Gastrocnemius medialis (tissue), 4 donors: ENCODE measurements at regions of chr14 and their contacts with region 1.

Region 1: GRCh38 chr14:66483322-66483721 is 2.8 kb upstream of the CCDC196 start:
- DNase-seq: peak; percentile 27 to 29
- ATAC-seq: peak; percentile 95 to 97
- H3K4me3 ChIP-seq: no peak overlapping the region
- H3K27ac ChIP-seq: peak overlapping the region in 3 of 4 donors; percentile 10 to 49 (median 32)
- H3K4me1 ChIP-seq: peaks cover 18 to 22% of the 10 kb centered on the region in 2 donors
- H3K27me3 ChIP-seq: no peaks in the 10 kb centered on the region
- CTCF ChIP-seq: no peak
- POLR2A ChIP-seq: no peak

Region 2: GRCh38 chr14:66425402-66425801 is 57.9 kb before region 1 on chr14:
- in situ Hi-C with region 1: no loop called
- intact Hi-C with region 1: loop called (anchors 1 kb)
- DNase-seq: peak; percentile 52 to 74
- ATAC-seq: peak; percentile 99
- H3K4me3 ChIP-seq: no peak overlapping the region
- H3K27ac ChIP-seq: peak overlapping the region; percentile 41 to 81 (median 63)
- H3K4me1 ChIP-seq: peaks cover 14 to 26% of the 10 kb centered on the region in 2 donors
- H3K27me3 ChIP-seq: no peaks in the 10 kb centered on the region
- CTCF ChIP-seq: no peak
- POLR2A ChIP-seq: no peak

Region 3: DNA sequence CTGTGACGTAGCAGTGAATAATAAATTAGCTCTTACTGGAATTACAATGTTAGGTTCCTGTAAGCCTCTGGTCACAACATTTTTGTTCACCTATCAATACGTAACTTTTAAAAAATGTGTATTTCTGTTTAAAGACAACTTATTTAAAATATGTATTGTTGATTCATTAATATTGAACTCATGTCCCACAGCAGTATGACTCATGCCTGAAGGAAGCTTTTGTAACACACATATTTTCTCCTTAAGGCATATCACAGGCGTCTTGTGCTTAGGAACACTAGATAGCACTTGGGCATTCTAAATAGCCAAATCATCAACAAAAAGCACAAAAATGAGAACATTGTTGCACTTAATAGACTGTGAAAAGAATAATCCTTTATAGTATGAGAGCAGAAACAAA is 117.1 kb after region 1 on chr14:
- in situ Hi-C with region 1: no loop called
- intact Hi-C with region 1: no loop called
- DNase-seq: no peak
- ATAC-seq: no peak
- H3K4me3 ChIP-seq: no peak overlapping the region
- H3K27ac ChIP-seq: no peak overlapping the region
- H3K4me1 ChIP-seq: no peaks in the 10 kb centered on the region
- H3K27me3 ChIP-seq: no peaks in the 10 kb centered on the region
- CTCF ChIP-seq: no peak
- POLR2A ChIP-seq: no peak